Activated CD4-positive, alpha-beta memory T cell treated with anti-CD3 and anti-CD28 coated beads, Interleukin-2, amount 10 ng/mL, durations not matched to agents 7 days and 5 days (primary cell): ENCODE measurements at regions of chr11 and their contacts with region 1.

Region 1: DNA sequence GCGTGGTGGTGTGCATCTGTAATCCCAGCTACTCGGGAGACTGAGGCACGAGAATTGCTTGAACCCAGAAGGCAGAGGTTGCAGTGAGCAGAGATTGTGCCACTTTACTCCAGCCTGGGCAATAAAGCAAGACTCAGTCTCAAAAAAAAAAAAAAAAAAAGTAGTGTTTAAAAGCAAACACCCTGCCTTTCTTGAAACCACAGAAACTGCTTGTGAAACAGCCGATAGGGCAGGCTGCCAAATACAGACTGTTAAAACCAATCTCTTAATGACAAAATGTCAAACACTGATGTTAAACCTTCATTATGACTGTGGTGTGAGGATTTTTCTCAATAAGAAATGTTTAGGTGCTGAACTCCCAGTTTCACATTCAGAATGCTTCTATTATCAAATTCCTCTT is 27.3 kb downstream of the MARK2 start:
- DNase-seq: peak; percentile 78
- H3K4me3 Mint-ChIP-seq: peak overlapping the region; percentile 49
- H3K27ac Mint-ChIP-seq: peak overlapping the region; percentile 80
- H3K4me1 Mint-ChIP-seq: peaks cover 77% of the 10 kb centered on the region
- H3K27me3 Mint-ChIP-seq: no peaks in the 10 kb centered on the region

Region 2: DNA sequence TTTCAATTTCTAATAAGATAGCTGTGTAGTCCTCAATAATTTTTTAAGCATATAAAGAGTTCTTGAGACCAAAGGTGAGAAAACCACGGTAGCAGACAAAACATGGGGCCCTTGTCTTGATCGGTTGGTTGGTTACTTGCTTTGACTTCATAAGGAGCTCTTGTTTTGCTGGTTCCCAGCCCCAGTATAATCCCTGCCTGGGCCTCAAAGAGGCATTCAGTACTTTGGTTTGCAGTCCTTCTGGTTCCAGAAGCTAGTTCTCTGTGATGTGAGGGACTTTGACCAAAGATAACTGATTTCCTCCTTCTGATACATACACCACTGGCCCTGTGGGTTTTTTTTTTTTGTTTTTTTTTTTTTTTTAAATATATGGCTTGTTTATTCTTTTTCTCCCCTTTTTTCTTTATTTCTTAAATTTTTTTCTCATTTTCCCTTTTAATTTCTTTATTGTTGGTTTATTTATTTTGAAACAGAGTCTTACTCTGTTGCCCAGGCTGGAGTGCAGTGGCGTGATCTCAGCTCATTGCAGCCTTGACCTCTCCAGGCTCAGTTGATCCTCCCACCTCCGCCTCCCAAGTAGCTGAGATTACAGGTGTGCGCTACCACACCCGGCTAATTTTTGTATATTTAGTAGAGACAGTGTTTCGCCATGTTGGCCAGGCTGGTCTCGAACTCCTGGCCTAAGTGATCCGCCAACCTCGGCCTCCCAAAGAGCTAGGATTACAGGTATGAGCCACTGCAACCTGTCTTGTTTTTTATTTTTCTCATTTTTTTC is 10.0 kb before region 1 on chr11:
- CTCF ChIA-PET with region 1: interaction called, 4 read pairs
- POLR2A ChIA-PET with region 1: interaction called, 12 read pairs
- DNase-seq: no peak
- H3K4me3 Mint-ChIP-seq: no peak overlapping the region
- H3K27ac Mint-ChIP-seq: no peak overlapping the region
- H3K4me1 Mint-ChIP-seq: peaks cover 51% of the 10 kb centered on the region
- H3K27me3 Mint-ChIP-seq: no peaks in the 10 kb centered on the region